ENCODE measurements at regions of chr2 and their contacts with region 1.

Region 1: GRCh38 chr2:168705534-168706470 is 96.6 kb upstream of the NOSTRIN start:
- DNase-seq: peak in 2 of 4 experiments; percentile 22 to 38
- ATAC-seq: peak; percentile 77
- H3K4me3 ChIP-seq: no peak overlapping the region
- H3K27ac ChIP-seq: no peak overlapping the region
- H3K4me1 ChIP-seq: no peaks in the 10 kb centered on the region; a peak in 1 of 5 replicates
- H3K27me3 ChIP-seq: no peaks in the 10 kb centered on the region
- CTCF ChIP-seq: peak; percentile 25 to 70 (median 46); a peak in 4 of 6 replicates
- EP300 ChIP-seq: no peak
- POLR2A ChIP-seq: no peak
- RAD21 ChIP-seq: peak; percentile 81 to 84

Region 2: DNA sequence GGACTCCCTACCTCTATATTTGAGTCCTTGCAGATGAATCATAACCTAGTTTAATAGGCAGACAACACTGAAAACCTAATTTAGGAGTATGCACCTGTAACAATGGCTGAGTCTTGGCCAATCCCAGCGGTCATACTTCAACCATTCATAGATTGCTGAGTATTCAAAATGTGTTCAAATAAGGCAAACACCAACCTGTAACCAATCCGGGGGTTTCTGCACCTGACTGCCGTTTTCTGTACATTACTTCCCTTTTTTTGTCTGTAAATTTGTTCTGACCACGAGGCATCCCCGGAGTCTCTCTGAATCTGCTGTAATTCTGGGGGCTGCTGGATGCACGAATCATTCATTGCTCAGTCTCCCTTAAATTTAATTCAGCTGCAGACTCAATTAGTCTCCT is 797.0 kb before region 1 on chr2:
- CTCF ChIA-PET with region 1: no interaction called
- POLR2A ChIA-PET with region 1: no interaction called
- in situ Hi-C with region 1: no loop called
- intact Hi-C with region 1: no loop called
- DNase-seq: no peak
- ATAC-seq: no peak; the same call in 2 of the 3 replicates
- H3K4me3 ChIP-seq: no peak overlapping the region
- H3K27ac ChIP-seq: no peak overlapping the region
- H3K4me1 ChIP-seq: no peaks in the 10 kb centered on the region
- H3K27me3 ChIP-seq: no peaks in the 10 kb centered on the region
- CTCF ChIP-seq: no peak
- EP300 ChIP-seq: no peak
- POLR2A ChIP-seq: no peak
- RAD21 ChIP-seq: no peak

Region 3: GRCh38 chr2:168160897-168161296 is 544.9 kb before region 1 on chr2:
- CTCF ChIA-PET with region 1: no interaction called
- POLR2A ChIA-PET with region 1: no interaction called
- in situ Hi-C with region 1: no loop called
- intact Hi-C with region 1: loop called (anchors 10 kb)
- DNase-seq: peak; percentile 24 to 35 (median 30)
- ATAC-seq: peak; percentile 79
- H3K4me3 ChIP-seq: no peak overlapping the region
- H3K27ac ChIP-seq: no peak overlapping the region
- H3K4me1 ChIP-seq: no peaks in the 10 kb centered on the region
- H3K27me3 ChIP-seq: peaks cover 0 to 7% of the 10 kb centered on the region in 2 experiments; a peak in 2 of 5 replicates
- CTCF ChIP-seq: peak; percentile 30 to 47 (median 46); a peak in 4 of 6 replicates
- EP300 ChIP-seq: no peak
- POLR2A ChIP-seq: no peak
- RAD21 ChIP-seq: peak; percentile 26 to 56; a peak in 2 of 4 replicates

Region 4: GRCh38 chr2:168330624-168331423 is 375.0 kb before region 1 on chr2:
- CTCF ChIA-PET with region 1: no interaction called
- POLR2A ChIA-PET with region 1: no interaction called
- in situ Hi-C with region 1: no loop called
- intact Hi-C with region 1: no loop called
- DNase-seq: no peak
- ATAC-seq: no peak
- H3K4me3 ChIP-seq: no peak overlapping the region
- H3K27ac ChIP-seq: no peak overlapping the region
- H3K4me1 ChIP-seq: no peaks in the 10 kb centered on the region
- H3K27me3 ChIP-seq: peaks cover 0 to 4% of the 10 kb centered on the region in 2 experiments; a peak in 2 of 5 replicates
- CTCF ChIP-seq: no peak
- EP300 ChIP-seq: no peak
- POLR2A ChIP-seq: no peak
- RAD21 ChIP-seq: no peak

Region 5: GRCh38 chr2:168530982-168531622 is 174.7 kb before region 1 on chr2:
- CTCF ChIA-PET with region 1: no interaction called
- POLR2A ChIA-PET with region 1: no interaction called
- in situ Hi-C with region 1: no loop called
- intact Hi-C with region 1: no loop called
- DNase-seq: no peak
- ATAC-seq: no peak
- H3K4me3 ChIP-seq: no peak overlapping the region
- H3K27ac ChIP-seq: no peak overlapping the region
- H3K4me1 ChIP-seq: peaks cover 0 to 13% of the 10 kb centered on the region in 2 experiments; a peak in 4 of 5 replicates
- H3K27me3 ChIP-seq: no peaks in the 10 kb centered on the region
- CTCF ChIP-seq: no peak
- EP300 ChIP-seq: no peak
- POLR2A ChIP-seq: no peak
- RAD21 ChIP-seq: no peak

Region 6: GRCh38 chr2:168930242-168930641 is 224.4 kb after region 1 on chr2:
- CTCF ChIA-PET with region 1: no interaction called
- POLR2A ChIA-PET with region 1: no interaction called
- in situ Hi-C with region 1: no loop called
- intact Hi-C with region 1: no loop called
- DNase-seq: no peak
- ATAC-seq: no peak
- H3K4me3 ChIP-seq: no peak overlapping the region
- H3K27ac ChIP-seq: no peak overlapping the region
- H3K4me1 ChIP-seq: peaks cover 5 to 16% of the 10 kb centered on the region in 2 experiments
- H3K27me3 ChIP-seq: no peaks in the 10 kb centered on the region
- CTCF ChIP-seq: no peak
- EP300 ChIP-seq: no peak
- POLR2A ChIP-seq: no peak
- RAD21 ChIP-seq: no peak

Measured in K562 (cell line).